AG04450 (cell line): ENCODE measurements at regions of chr12 and their contacts with region 1.

Region 1: DNA sequence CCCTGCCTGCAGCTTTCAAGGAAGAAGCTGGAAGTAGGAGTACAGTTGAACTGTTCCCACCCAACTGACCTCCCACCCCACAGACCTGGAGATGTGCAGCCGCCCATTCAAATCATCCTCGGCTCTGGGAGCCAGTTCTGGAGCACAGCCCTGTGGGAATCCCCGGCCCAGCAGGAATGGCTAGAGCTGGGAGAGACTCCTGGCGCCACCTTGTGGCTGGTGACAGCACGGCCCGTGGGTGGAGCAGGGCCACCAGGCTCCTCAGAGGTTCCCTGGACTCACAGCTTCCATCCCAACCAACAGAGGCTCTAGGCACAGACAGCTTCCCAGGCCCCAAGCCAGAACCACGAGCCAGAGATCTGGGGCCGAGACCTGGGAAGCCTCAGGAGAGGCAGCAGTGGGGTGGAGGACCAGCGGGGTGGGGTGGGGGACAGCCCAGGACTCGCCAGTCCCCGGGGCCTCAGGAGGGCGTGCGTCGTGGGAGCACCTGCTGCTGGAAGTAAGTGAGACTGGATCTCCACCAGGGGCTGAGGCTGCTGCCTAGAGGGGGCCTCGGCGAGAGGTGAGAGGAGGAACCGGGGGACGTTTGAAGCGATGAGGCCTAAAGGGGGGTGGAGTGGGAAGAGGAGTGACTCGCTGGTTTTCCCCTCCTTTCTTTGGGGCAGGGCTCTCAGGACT is 43.4 kb downstream of the RNF34 start:
- DNase-seq: peak; percentile 13
- H3K4me3 ChIP-seq: no peak overlapping the region
- H3K27ac ChIP-seq: peak overlapping the region; percentile 11
- H3K27me3 ChIP-seq: no peaks in the 10 kb centered on the region
- CTCF ChIP-seq: peak; percentile 92

Region 2: DNA sequence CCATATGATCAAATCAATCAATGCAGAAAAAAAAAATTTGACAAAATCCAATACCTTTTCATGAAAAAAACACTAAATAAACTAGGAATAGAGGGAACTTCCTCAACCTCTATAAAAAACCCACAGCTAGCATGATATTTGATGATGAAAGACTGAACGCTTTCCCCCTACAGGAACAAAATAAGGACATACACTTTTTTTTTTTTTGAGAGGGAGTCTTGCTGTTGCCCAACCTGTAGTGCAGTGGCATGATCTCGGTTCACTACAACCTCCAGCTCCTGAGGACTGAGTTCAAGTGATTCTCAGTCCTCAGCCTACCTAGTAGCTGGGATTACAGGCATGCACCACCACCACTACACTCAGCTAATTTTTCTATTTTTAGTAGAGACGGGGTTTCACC is 128.9 kb before region 1 on chr12:
- CTCF ChIA-PET with region 1: interaction called, 12 read pairs
- POLR2A ChIA-PET with region 1: no interaction called
- DNase-seq: no peak
- H3K4me3 ChIP-seq: no peak overlapping the region
- H3K27ac ChIP-seq: no peak overlapping the region
- H3K27me3 ChIP-seq: no peaks in the 10 kb centered on the region
- CTCF ChIP-seq: no peak

Region 3: DNA sequence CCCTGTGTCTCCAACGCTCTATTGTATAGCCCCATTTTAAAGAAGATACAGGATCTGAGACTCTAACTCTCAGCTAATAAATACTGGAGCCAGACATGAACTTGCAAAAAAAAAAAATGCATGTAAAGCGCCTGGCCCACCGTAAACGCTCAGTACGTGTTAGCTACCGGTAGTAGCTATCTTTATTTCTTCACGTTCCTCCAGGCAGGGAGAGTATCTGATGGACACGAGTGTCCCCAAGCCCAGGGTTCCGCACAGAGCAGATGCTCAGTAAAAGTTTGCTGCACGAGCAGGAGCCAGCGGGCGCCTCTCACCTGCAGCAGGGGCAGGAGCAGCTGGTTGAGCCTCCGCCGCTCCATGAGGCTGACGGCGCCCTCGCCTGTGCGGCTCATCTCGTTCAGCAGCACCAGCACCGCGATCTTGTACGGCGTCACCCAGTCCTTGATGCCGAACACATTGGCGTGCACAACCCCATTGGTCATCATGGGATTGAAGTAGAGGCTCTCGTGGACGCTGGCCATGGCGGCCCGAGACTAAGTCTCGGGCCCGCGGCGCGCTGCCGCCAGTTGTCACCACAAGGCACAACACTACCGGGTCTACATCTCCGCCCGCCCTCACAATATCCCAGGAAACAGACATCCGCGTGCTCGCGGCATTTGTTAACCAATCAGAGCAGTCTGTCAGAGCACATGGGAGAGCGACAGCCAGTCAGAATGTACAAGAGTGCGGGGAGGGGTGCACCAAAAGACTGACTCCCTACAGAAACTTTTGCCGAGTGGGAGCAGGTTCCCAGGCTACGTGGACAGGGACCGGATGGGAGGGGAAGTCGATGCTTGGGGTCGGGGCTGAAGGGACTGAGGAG is 91.3 kb before region 1 on chr12 and contains the start of gene ANAPC5:
- CTCF ChIA-PET with region 1: interaction called, 17 read pairs
- POLR2A ChIA-PET with region 1: interaction called, 5 read pairs
- DNase-seq: peak; percentile 95
- H3K4me3 ChIP-seq: peak within 1 kb of the TSS; percentile 95
- H3K27ac ChIP-seq: peak within 1 kb of the TSS; percentile 87
- H3K27me3 ChIP-seq: no peaks in the 10 kb centered on the region
- CTCF ChIP-seq: no peak
- polyA plus RNA-seq, gene ANAPC5: 145 and 146 TPM in 2 replicates

Region 4: GRCh38 chr12:121423682-121424623 is 19.4 kb before region 1 on chr12:
- CTCF ChIA-PET with region 1: interaction called, 20 read pairs
- POLR2A ChIA-PET with region 1: no interaction called
- DNase-seq: no peak
- H3K4me3 ChIP-seq: no peak overlapping the region
- H3K27ac ChIP-seq: no peak overlapping the region
- H3K27me3 ChIP-seq: no peaks in the 10 kb centered on the region
- CTCF ChIP-seq: no peak

Region 5: GRCh38 chr12:121455766-121456420 is 12.6 kb after region 1 on chr12:
- CTCF ChIA-PET with region 1: interaction called, 16 read pairs
- POLR2A ChIA-PET with region 1: no interaction called
- DNase-seq: no peak
- H3K4me3 ChIP-seq: no peak overlapping the region
- H3K27ac ChIP-seq: no peak overlapping the region
- H3K27me3 ChIP-seq: no peaks in the 10 kb centered on the region
- CTCF ChIP-seq: no peak